PC-3 (cell line): ENCODE measurements at regions of chr6 and their contacts with region 1.

Region 1: DNA sequence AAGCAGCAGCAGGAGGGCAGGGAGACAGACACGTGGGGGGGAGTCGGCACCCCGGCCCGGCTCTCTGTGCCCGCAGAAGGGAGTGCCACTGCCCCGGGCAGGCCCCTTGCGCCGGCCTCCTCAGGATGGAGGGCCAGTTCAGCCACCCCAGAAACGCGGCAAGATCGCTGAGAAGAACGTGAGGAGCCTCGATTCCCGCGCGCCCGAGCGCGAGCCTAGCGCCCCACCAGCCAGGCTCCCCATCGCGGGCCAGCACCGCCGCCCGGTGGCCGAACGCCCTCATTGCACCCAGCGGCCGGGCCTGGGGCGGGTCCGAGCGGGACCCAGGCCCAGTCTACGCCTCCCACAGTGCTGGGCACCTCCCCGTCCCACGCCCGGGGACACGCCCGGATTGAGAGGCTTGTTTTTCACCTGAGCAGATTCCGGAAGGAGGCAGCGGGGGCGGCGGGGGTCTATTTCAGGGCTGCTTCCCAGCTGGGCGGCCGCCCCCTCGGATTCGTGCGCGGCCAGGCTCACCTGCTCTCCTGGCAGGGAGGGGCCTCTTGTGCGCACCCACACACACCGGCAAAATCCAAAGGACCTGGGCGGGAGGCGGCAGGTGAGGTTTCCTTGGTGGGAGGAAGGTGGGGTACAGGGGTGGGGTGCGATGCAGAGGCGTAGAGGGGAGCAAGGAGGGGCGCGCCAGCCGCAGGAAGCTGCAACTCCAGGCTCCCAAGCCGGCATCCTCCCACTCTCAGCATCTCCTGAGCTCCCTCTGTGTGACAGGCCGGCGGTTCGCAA is 9.0 kb upstream of the GRM4 start:
- DNase-seq: peak; percentile 52
- ATAC-seq: peak; percentile 78
- H3K4me3 ChIP-seq: peak overlapping the region; percentile 45
- H3K27ac ChIP-seq: no peak overlapping the region
- H3K4me1 ChIP-seq: peaks cover 3% of the 10 kb centered on the region; the same call in 1 of the 2 replicates
- H3K27me3 ChIP-seq: peaks cover 22% of the 10 kb centered on the region
- CTCF ChIP-seq: peak; percentile 94

Region 2: GRCh38 chr6:34055223-34055933 is 99.5 kb before region 1 on chr6:
- CTCF ChIA-PET with region 1: interaction called, 16 read pairs
- POLR2A ChIA-PET with region 1: no interaction called
- intact Hi-C with region 1: loop called (anchors 1 kb)
- DNase-seq: peak; percentile 72
- ATAC-seq: peak; percentile 83
- H3K4me3 ChIP-seq: no peak overlapping the region
- H3K27ac ChIP-seq: no peak overlapping the region
- H3K4me1 ChIP-seq: peaks cover 16% of the 10 kb centered on the region
- H3K27me3 ChIP-seq: no peaks in the 10 kb centered on the region
- CTCF ChIP-seq: peak; percentile 95